ENCODE measurements at regions of chr14 and their contacts with region 1.

Region 1: DNA sequence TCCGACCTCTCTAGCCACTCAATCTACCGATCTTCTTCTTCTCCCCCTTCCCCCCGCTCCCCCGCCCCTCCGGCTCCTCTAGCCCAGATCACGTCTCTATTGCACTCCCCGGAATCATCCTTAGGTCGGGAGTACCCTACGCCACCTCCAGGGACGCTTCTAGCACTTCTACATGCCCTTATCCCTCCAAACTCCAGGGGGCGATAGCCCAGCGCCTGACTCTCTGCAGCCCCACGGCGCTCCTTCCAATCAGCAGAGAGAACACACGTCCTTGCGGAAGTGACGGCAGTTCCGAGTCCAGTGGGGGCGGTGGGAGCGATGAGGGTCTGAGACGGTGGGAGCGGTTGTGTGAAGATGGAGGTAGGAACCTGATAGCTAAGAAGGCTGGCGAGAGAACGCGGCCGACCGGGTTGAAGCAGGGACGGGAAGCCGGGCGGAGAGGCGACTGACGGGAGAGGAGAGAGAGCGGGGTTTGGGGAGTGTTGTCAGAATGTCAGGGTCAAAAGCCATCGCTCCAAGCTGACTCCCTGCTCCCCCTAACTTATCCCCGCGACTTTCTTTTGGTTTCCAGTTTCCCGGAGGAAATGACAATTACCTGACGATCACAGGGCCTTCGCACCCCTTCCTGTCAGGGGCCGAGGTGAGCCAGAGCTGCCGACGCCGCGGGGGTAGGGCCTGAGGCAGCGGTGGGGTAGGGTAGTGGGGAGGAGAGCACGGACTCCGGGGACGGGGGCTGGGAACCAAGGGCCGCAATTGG is at the starts of genes RAB2B and TOX4:
- DNase-seq: peak; percentile 79 to 99 (median 97)
- ATAC-seq: peak; percentile 95 to 96
- H3K4me3 Mint-ChIP-seq: peak within 1 kb of the TSS; percentile 93 to 100 (median 100)
- H3K27ac Mint-ChIP-seq: peak within 1 kb of the TSS; percentile 97 to 100 (median 99)
- H3K4me1 Mint-ChIP-seq: peaks cover 13 to 51% (median 42%) of the 10 kb centered on the region in 4 donors
- H3K27me3 Mint-ChIP-seq: no peaks in the 10 kb centered on the region
- polyA plus RNA-seq, gene RAB2B: 8.7 to 11.0 (median 9.9) TPM
- polyA plus RNA-seq, gene TOX4: 68.6 to 87.5 (median 75.8) TPM

Region 2: GRCh38 chr14:21383848-21384493 is 93.1 kb before region 1 on chr14 and contains the start of gene SUPT16H:
- POLR2A ChIA-PET with region 1: interaction called, 10 read pairs
- DNase-seq: peak; percentile 83 to 94 (median 88)
- ATAC-seq: peak; percentile 90 to 92
- H3K4me3 Mint-ChIP-seq: peak within 1 kb of the TSS; percentile 94 to 100 (median 98)
- H3K27ac Mint-ChIP-seq: peak within 1 kb of the TSS; percentile 97 to 100 (median 99)
- H3K4me1 Mint-ChIP-seq: peaks cover 16 to 48% (median 42%) of the 10 kb centered on the region in 4 donors
- H3K27me3 Mint-ChIP-seq: no peaks in the 10 kb centered on the region
- polyA plus RNA-seq, gene SUPT16H: 66.8 to 72.3 (median 70.2) TPM

Region 3: GRCh38 chr14:21455911-21456667 is 21.0 kb before region 1 on chr14 and contains the start of gene CHD8:
- POLR2A ChIA-PET with region 1: interaction called, 42 read pairs
- DNase-seq: peak; percentile 95 to 100 (median 100)
- ATAC-seq: peak; percentile 96
- H3K4me3 Mint-ChIP-seq: peak within 1 kb of the TSS; percentile 93 to 100 (median 99)
- H3K27ac Mint-ChIP-seq: peak within 1 kb of the TSS; percentile 95 to 100 (median 100)
- H3K4me1 Mint-ChIP-seq: peaks cover 14 to 48% (median 42%) of the 10 kb centered on the region in 4 donors
- H3K27me3 Mint-ChIP-seq: no peaks in the 10 kb centered on the region
- polyA plus RNA-seq, gene CHD8: 20.7 to 34.9 (median 29.4) TPM

Measured in naive thymus-derived CD8-positive, alpha-beta T cell (primary cell).